Panc1 (cell line): ENCODE measurements at regions of chr5 and their contacts with region 1.

Region 1: DNA sequence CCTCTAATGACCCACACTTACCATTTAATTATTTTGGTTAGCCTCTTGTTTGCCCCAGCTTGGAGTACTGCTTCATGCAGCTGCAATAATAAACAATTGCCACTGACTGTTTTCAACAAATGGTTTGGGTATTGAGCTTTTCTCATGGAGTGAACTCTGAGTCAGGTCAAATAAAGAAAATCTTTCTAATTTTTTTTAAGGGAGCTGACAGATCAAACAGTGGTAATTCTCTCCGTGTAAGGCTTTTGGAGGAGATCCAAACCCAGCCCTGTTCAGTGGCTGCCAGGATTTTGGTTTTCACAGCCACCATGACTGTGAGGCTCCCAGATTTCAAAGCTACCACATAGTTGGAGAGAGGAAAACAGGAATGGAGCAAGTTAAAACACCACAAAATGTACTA is 110.7 kb upstream of the EFNA5 start:
- DNase-seq: no peak
- ATAC-seq: no peak
- H3K4me3 ChIP-seq: no peak overlapping the region
- H3K27ac ChIP-seq: no peak overlapping the region
- H3K4me1 ChIP-seq: no peaks in the 10 kb centered on the region
- H3K27me3 ChIP-seq: no peaks in the 10 kb centered on the region
- CTCF ChIP-seq: no peak

Region 2: GRCh38 chr5:107724642-107725041 is 56.8 kb before region 1 on chr5:
- CTCF ChIA-PET with region 1: no interaction called
- POLR2A ChIA-PET with region 1: no interaction called
- in situ Hi-C with region 1: no loop called
- intact Hi-C with region 1: no loop called
- DNase-seq: no peak
- ATAC-seq: no peak
- H3K4me3 ChIP-seq: no peak overlapping the region
- H3K27ac ChIP-seq: no peak overlapping the region
- H3K4me1 ChIP-seq: no peaks in the 10 kb centered on the region
- H3K27me3 ChIP-seq: no peaks in the 10 kb centered on the region
- CTCF ChIP-seq: no peak

Region 3: GRCh38 chr5:107900721-107901120 is 119.3 kb after region 1 on chr5:
- CTCF ChIA-PET with region 1: no interaction called
- POLR2A ChIA-PET with region 1: no interaction called
- in situ Hi-C with region 1: no loop called
- intact Hi-C with region 1: no loop called
- DNase-seq: no peak
- ATAC-seq: no peak
- H3K4me3 ChIP-seq: no peak overlapping the region
- H3K27ac ChIP-seq: no peak overlapping the region
- H3K4me1 ChIP-seq: no peaks in the 10 kb centered on the region
- H3K27me3 ChIP-seq: no peaks in the 10 kb centered on the region
- CTCF ChIP-seq: no peak

Region 4: DNA sequence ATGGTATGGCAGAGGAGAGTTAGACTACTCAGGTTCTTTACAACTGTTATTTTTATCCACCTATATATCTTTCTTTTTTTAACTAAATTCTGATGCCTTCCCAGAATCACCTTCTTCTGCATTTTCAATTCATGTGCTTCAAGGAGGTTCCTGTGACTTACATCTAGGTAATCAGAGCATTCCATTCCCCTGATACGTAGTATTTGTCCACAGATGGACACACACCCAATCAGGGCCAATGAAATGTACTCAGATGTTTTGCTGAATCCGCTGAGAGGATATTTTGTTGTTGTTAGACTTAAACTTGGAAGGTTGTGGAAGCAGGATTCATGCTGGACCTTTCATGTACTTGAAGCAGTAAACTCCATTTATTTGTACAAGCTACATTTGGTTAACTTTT is 806.9 kb after region 1 on chr5:
- CTCF ChIA-PET with region 1: no interaction called
- POLR2A ChIA-PET with region 1: no interaction called
- in situ Hi-C with region 1: no loop called
- intact Hi-C with region 1: loop called (anchors 5 kb)
- DNase-seq: no peak
- ATAC-seq: no peak
- H3K4me3 ChIP-seq: no peak overlapping the region
- H3K27ac ChIP-seq: no peak overlapping the region
- H3K4me1 ChIP-seq: no peaks in the 10 kb centered on the region
- H3K27me3 ChIP-seq: no peaks in the 10 kb centered on the region
- CTCF ChIP-seq: no peak